Activated CD4-positive, alpha-beta T cell treated with anti-CD3 and anti-CD28 coated beads for 36 hours (primary cell): ENCODE measurements at regions of chr3 and their contacts with region 1.

Region 1: DNA sequence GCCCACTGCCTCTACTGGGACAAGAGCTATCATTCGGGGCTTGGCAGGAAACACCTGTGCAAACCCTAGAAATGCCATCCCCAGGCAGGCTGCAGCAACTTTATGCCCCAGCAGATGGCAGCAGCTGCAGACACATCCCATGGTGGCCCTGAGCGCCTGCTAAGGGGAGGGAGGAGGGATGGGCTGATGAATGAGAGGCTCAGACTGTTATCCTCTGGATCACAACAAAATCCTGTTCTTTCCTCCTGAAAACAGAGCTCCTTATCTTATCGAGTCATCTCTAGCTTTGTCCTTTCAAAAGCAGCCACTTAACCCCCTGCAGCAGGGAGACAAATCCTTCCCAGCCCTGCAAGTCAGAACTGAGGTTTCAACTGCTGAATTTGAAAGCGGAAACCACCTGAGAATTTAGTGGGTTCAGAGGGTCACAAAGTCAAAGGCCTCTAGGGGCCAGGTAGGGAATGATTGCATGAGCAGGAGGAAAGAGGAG is 90.6 kb upstream of the PROK2 start:
- DNase-seq: peak; percentile 90
- ATAC-seq: peak; percentile 90
- H3K4me3 Mint-ChIP-seq: no peak overlapping the region
- H3K27ac Mint-ChIP-seq: peak overlapping the region; percentile 89
- H3K4me1 Mint-ChIP-seq: peaks cover 35% of the 10 kb centered on the region
- H3K27me3 Mint-ChIP-seq: peaks cover 6% of the 10 kb centered on the region

Region 2: GRCh38 chr3:71859123-71859519 is 16.4 kb before region 1 on chr3:
- CTCF ChIA-PET with region 1: interaction called, 12 read pairs
- POLR2A ChIA-PET with region 1: interaction called, 3 read pairs
- intact Hi-C with region 1: no loop called
- DNase-seq: peak; percentile 22
- ATAC-seq: peak; percentile 91
- H3K4me3 Mint-ChIP-seq: no peak overlapping the region
- H3K27ac Mint-ChIP-seq: no peak overlapping the region
- H3K4me1 Mint-ChIP-seq: peaks cover 10% of the 10 kb centered on the region
- H3K27me3 Mint-ChIP-seq: peaks cover 11% of the 10 kb centered on the region

Region 3: DNA sequence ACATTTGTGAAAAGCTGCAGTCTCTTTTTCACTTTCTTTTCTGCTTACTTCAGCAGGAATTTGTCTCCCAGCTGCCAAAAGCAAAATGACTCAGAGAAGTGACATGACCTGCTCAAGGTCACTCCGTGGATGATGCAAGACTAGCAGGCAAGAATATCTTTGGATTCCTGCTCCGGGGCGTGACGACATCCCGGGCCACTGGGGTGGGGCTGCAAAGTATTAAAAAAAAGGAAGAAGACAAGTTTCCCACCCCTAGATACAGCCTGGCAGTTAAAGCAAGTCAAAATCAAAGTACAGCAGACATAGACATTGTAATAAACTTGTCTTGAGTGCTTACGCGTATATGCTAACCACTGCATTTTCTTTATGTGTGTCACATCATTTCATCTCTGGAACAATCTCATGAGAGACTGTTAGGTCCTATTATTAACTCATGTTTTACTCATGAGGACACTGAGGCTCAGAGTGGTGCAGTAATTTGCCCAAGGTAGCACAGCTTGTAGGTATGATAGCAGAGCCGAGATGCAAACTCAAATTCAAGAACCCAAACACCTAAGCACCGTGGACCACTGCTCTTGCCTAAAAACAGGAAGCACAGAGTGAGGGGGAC is 394.7 kb after region 1 on chr3:
- CTCF ChIA-PET with region 1: no interaction called
- POLR2A ChIA-PET with region 1: no interaction called
- intact Hi-C with region 1: loop called in 1 of 2 experiments (anchors 10 kb)
- DNase-seq: peak; percentile 38
- ATAC-seq: peak; percentile 59
- H3K4me3 Mint-ChIP-seq: no peak overlapping the region
- H3K27ac Mint-ChIP-seq: peak overlapping the region; percentile 69
- H3K4me1 Mint-ChIP-seq: peaks cover 68% of the 10 kb centered on the region
- H3K27me3 Mint-ChIP-seq: peaks cover 3% of the 10 kb centered on the region

Region 4: DNA sequence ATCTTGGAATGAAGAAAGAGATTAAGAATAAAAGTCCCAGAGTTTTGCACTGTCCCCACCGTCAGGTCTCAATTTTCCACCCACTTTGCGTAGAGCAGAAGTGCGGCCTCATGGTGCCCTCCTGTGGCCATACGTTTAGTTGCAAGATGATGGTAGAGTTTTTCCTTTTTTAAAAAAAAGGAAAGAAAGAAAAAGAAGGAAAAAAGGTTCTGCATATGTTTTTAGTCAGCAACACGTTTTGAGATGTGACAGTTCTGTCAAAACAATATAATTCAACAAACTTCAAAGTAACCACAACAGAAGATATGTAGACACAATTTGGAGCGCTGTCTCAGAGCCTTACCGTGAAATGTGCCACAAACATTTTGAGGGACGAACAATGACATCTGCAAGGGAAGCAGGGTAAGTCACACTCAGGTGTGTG is 1210.6 kb after region 1 on chr3:
- CTCF ChIA-PET with region 1: no interaction called
- POLR2A ChIA-PET with region 1: no interaction called
- intact Hi-C with region 1: loop called in 1 of 2 experiments (anchors 1 kb)
- DNase-seq: peak; percentile 70
- ATAC-seq: peak; percentile 72
- H3K4me3 Mint-ChIP-seq: no peak overlapping the region
- H3K27ac Mint-ChIP-seq: no peak overlapping the region
- H3K4me1 Mint-ChIP-seq: peaks cover 8% of the 10 kb centered on the region
- H3K27me3 Mint-ChIP-seq: no peaks in the 10 kb centered on the region